ENCODE measurements at regions of chr17 and their contacts with region 1.

Region 1: DNA sequence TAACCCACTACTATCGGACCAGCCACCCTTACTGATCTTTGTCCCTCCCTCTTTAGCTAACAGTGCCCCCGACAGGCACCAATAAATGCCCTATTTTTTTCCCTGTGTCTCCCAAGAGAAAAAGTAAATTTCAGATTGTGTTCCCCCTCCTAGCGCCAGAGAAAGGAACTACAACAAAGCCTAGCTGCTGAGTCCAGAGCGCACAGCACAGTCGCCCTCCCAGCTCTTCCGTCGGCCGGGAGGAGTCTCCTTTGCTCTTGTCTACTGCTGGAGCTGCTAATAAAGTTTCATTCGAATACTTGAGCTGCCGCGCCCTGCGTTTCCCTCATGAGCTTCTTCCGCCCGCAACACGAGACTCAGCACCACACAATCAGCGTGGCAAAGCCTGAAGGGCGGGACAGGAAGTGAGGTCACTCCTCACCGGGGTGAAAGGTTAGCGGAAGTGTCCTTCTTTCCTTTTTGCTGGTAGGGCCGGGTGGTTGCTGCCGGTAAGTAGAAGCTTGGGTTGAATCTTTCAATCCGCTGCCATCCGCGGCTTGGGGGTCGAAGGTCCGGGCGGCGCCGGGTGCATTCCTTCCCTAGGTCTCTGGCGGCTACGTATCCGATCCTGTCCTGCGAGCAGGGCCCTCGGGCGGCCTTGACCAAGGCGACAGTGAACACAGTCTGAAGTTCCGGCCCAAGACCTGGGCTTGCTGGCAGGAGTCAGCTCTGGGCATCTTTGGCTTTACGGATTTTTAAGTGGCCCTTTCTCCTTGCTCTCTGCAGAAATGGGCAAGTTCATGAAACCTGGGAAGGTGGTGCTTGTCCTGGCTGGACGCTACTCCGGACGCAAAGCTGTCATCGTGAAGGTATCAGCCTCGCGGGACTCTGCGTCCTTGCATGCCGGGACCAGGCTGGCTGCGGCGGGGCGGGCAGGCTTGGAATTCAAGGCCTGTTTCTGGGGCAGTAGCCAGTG is at the start of gene RPL27:
- DNase-seq: peak; percentile 100
- ATAC-seq: peak; percentile 91
- H3K4me3 ChIP-seq: peak within 1 kb of the TSS; percentile 81 to 95 (median 92)
- H3K27ac ChIP-seq: peak within 1 kb of the TSS; percentile 94
- H3K4me1 ChIP-seq: peaks cover 48% of the 10 kb centered on the region
- H3K27me3 ChIP-seq: no peaks in the 10 kb centered on the region; a peak in 1 of 5 replicates
- CTCF ChIP-seq: peak; percentile 90
- EP300 ChIP-seq: peak; percentile 77 to 81; a peak in 3 of 4 replicates
- POLR2A ChIP-seq: peak; percentile 93 to 98
- RAD21 ChIP-seq: peak; percentile 85
- total RNA-seq, gene RPL27: 1,585 and 1,854 TPM in 2 replicates

Region 2: GRCh38 chr17:42779936-42780850 is 218.1 kb before region 1 on chr17 and contains the start of gene WNK4:
- CTCF ChIA-PET with region 1: no interaction called
- POLR2A ChIA-PET with region 1: interaction called, 16 read pairs
- in situ Hi-C with region 1: no loop called
- intact Hi-C with region 1: no loop called
- DNase-seq: peak; percentile 98
- ATAC-seq: peak; percentile 88
- H3K4me3 ChIP-seq: peak within 1 kb of the TSS; percentile 87 to 99 (median 92)
- H3K27ac ChIP-seq: peak within 1 kb of the TSS; percentile 98
- H3K4me1 ChIP-seq: peaks cover 64% of the 10 kb centered on the region
- H3K27me3 ChIP-seq: no peaks in the 10 kb centered on the region; a peak in 1 of 5 replicates
- CTCF ChIP-seq: 0 out of 2 replicates have a peak, but pooled peaks have one; percentile 42
- EP300 ChIP-seq: peak in 1 of 2 experiments; percentile 92; a peak in 3 of 4 replicates
- POLR2A ChIP-seq: peak; percentile 90
- RAD21 ChIP-seq: peak; percentile 17
- total RNA-seq, gene WNK4: 1.5 and 2.7 TPM in 2 replicates

Region 3: DNA sequence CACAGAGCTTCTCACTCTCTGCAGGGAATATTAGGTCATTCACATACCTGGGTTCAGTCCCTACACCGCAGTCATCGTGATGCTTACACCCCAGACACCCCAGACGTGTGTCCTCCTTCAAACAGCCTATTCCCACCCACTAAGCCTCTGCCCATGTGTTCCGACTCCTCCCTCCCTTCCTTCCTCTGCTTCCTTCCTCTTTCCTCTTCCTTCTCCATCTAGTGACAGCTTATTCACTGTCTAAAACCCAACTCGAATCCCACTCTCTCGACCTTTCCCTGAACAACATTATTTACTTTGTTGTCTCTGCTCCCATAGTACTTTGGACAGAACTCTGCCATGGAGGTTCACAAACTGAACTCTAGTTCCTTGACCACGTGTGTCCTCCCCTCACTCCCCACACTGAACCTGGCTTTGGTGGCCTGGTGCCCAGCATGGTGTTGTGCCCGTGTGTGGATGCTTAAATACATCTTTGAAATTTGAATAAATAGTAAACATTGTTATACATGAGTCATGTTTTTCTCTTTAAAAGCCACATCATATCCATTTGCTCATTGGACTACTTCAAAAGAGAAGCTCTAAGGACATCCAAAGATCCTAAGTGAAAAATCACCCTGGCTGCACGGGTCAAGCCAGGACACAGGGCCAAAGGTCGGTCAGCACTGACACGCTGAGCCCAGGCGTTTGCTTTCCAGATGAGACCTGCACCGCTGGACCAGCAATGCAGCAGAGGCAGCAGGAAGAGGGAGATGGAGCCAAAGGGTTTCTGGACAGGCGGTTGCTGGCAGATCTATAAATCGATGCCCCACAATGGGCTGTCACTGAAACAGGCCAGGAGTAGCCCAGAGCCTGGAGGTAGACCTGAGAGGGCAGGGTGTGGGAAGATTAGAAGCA is 111.7 kb before region 1 on chr17:
- CTCF ChIA-PET with region 1: no interaction called
- POLR2A ChIA-PET with region 1: interaction called, 11 read pairs
- in situ Hi-C with region 1: no loop called
- intact Hi-C with region 1: no loop called
- DNase-seq: peak; percentile 72
- ATAC-seq: peak; percentile 78
- H3K4me3 ChIP-seq: peak overlapping the region in 1 of 3 experiments; percentile 49; a peak in 2 of 6 replicates
- H3K27ac ChIP-seq: peak overlapping the region; percentile 65
- H3K4me1 ChIP-seq: peaks cover 96% of the 10 kb centered on the region
- H3K27me3 ChIP-seq: no peaks in the 10 kb centered on the region
- CTCF ChIP-seq: peak; percentile 45
- EP300 ChIP-seq: no peak; a peak in 1 of 4 replicates
- POLR2A ChIP-seq: no peak; a peak in 2 of 4 replicates
- RAD21 ChIP-seq: peak; percentile 67; the same call in 1 of the 2 replicates

Region 4: GRCh38 chr17:42980398-42981397 is 17.6 kb before region 1 on chr17 and contains the start of gene RUNDC1:
- CTCF ChIA-PET with region 1: interaction called, 3 read pairs
- POLR2A ChIA-PET with region 1: interaction called, 53 read pairs
- in situ Hi-C with region 1: no loop called
- intact Hi-C with region 1: loop called (anchors 2 kb)
- DNase-seq: peak; percentile 85
- ATAC-seq: peak; percentile 85
- H3K4me3 ChIP-seq: peak within 1 kb of the TSS; percentile 77 to 97 (median 91)
- H3K27ac ChIP-seq: peak within 1 kb of the TSS; percentile 71
- H3K4me1 ChIP-seq: peaks cover 46% of the 10 kb centered on the region
- H3K27me3 ChIP-seq: peaks cover 0 to 3% of the 10 kb centered on the region in 2 experiments; a peak in 1 of 5 replicates
- CTCF ChIP-seq: peak; percentile 72
- EP300 ChIP-seq: no peak
- POLR2A ChIP-seq: peak in 1 of 2 experiments; percentile 64; a peak in 3 of 4 replicates
- RAD21 ChIP-seq: peak; percentile 90
- total RNA-seq, gene RUNDC1: 9.4 and 10.3 TPM in 2 replicates

Region 5: DNA sequence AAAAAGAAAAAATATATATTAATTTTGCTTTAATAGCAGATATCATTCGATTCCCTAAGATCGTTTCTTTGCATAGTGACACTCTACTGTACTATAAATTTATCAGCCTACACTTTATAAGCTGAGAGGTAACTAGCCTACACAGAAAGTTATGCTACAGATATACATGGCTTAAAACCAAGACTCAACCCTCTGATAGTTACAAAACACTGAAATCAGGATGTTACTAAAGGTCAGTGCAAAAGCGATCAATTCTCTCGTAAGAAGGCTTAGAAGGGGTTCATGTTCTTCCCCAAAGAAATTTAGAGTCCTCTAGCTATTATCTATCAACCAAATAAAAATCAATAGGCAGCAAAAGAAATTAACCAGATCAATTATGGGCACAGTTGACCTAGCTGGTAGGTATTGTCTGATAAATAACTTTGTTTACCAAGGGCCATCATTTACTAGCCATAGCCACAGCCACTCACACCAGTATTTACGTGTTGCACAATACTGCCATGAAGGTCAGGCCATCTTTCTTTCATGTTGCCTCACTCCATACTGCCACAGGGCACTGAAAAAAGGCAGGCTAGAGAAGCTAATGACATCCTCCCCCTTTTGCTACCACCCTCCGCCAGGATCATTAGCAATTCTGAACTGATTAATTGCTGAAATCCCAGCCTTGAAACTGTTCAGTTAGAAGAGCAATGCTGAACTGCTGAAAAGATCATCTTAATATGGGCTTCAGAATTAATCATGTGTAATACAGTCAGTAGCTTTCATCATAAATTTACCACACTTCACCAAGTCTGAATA is 70.5 kb after region 1 on chr17:
- CTCF ChIA-PET with region 1: no interaction called
- POLR2A ChIA-PET with region 1: interaction called, 12 read pairs
- in situ Hi-C with region 1: no loop called
- intact Hi-C with region 1: no loop called
- DNase-seq: peak; percentile 90
- ATAC-seq: peak; percentile 99
- H3K4me3 ChIP-seq: peak overlapping the region in 2 of 3 experiments; percentile 19 to 21; a peak in 2 of 6 replicates
- H3K27ac ChIP-seq: peak overlapping the region; percentile 79
- H3K4me1 ChIP-seq: peaks cover 22% of the 10 kb centered on the region
- H3K27me3 ChIP-seq: no peaks in the 10 kb centered on the region
- CTCF ChIP-seq: peak; percentile 36
- EP300 ChIP-seq: peak; percentile 86 to 97
- POLR2A ChIP-seq: 0 out of 4 replicates have a peak, but pooled peaks of 1 of the 2 experiments have one; percentile 16
- RAD21 ChIP-seq: 0 out of 2 replicates have a peak, but pooled peaks have one; percentile 24

Region 6: DNA sequence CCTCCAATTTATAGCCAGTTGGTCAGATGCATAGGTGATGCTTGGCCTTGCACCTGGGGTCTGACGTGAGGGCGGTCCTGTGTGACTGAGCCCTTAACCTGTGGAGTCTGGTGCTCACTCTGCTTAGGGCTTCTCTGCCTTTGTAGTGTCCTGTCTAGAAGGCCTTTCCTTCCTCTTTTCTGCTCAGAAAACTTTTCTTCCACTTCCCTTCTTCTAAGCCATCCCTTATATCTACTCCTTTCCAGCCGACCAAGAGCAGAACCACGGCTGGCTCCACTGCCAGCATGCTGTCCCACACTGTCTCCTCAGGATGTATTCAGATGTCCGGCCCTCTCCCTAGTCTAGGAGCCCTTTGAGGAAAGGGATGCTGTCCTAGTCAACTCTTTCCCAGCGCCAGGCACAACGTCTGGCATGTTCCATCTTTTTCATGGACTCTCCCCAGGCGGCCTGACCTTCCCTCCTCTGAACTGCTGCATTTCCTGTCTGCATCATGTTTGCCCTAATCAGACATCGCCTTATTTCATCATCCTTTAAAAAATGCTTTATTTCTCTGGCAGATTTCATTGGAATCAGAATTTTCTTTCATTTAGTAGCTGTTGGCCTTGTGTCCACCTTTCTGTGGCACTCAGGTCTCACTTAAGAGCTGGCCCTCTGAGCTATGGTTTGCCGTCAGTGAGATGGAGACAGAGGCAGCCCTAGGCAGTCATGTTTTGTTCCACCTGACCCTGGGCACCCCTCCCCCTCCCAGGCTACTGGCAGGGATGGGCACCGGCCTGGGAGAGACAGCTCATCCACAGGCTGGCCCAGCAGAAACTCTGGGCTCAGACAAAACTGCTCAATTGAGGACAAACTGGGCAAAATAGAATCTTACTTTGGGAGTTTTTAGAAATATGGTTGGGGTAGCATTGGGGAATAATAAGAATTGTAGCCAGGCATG is 142.4 kb after region 1 on chr17:
- CTCF ChIA-PET with region 1: no interaction called
- POLR2A ChIA-PET with region 1: no interaction called
- in situ Hi-C with region 1: no loop called
- intact Hi-C with region 1: no loop called
- DNase-seq: no peak
- ATAC-seq: peak; percentile 26; the same call in 1 of the 3 replicates
- H3K4me3 ChIP-seq: no peak overlapping the region
- H3K27ac ChIP-seq: no peak overlapping the region
- H3K4me1 ChIP-seq: peaks cover 3% of the 10 kb centered on the region
- H3K27me3 ChIP-seq: no peaks in the 10 kb centered on the region
- CTCF ChIP-seq: no peak
- EP300 ChIP-seq: no peak
- POLR2A ChIP-seq: peak in 1 of 2 experiments; percentile 16; a peak in 1 of 4 replicates
- RAD21 ChIP-seq: no peak

Region 7: DNA sequence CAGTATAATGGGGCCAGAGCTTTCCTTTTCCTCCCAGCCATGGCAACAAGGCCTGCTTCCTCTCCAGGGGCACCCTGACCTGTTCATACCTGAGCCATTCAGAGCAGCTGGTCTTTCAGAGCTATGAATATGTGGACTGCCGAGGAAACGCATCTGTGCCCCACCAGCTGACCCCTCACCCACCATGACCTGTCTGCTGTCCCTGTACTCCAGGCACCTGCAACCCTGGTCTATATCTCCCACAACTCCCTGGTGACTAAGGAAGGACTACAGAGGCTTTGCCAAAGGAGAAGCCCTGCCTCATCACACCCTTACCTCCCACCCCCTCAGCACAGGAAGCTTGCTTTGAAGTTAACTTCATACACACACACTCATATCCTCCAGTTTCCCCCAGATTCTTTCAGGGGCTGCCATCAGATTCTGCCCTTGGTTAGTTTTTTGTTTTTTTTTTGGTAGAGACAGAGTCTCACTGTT is 219.4 kb after region 1 on chr17:
- CTCF ChIA-PET with region 1: no interaction called
- POLR2A ChIA-PET with region 1: interaction called, 19 read pairs
- in situ Hi-C with region 1: no loop called
- intact Hi-C with region 1: no loop called
- DNase-seq: no peak
- ATAC-seq: peak; percentile 3; the same call in 2 of the 3 replicates
- H3K4me3 ChIP-seq: no peak overlapping the region
- H3K27ac ChIP-seq: peak overlapping the region; percentile 94
- H3K4me1 ChIP-seq: peaks cover 70% of the 10 kb centered on the region
- H3K27me3 ChIP-seq: no peaks in the 10 kb centered on the region
- CTCF ChIP-seq: no peak
- EP300 ChIP-seq: no peak
- POLR2A ChIP-seq: no peak; a peak in 1 of 4 replicates
- RAD21 ChIP-seq: no peak